PC-9 (cell line): ENCODE measurements at regions of chr1 and their contacts with region 1.

Region 1: GRCh38 chr1:94115900-94116436 is 5.0 kb downstream of the ABCA4 start:
- DNase-seq: no peak
- H3K4me3 ChIP-seq: no peak overlapping the region
- H3K27ac ChIP-seq: peak overlapping the region; percentile 39
- H3K4me1 ChIP-seq: peaks cover 49% of the 10 kb centered on the region
- H3K27me3 ChIP-seq: no peaks in the 10 kb centered on the region
- CTCF ChIP-seq: no peak

Region 2: DNA sequence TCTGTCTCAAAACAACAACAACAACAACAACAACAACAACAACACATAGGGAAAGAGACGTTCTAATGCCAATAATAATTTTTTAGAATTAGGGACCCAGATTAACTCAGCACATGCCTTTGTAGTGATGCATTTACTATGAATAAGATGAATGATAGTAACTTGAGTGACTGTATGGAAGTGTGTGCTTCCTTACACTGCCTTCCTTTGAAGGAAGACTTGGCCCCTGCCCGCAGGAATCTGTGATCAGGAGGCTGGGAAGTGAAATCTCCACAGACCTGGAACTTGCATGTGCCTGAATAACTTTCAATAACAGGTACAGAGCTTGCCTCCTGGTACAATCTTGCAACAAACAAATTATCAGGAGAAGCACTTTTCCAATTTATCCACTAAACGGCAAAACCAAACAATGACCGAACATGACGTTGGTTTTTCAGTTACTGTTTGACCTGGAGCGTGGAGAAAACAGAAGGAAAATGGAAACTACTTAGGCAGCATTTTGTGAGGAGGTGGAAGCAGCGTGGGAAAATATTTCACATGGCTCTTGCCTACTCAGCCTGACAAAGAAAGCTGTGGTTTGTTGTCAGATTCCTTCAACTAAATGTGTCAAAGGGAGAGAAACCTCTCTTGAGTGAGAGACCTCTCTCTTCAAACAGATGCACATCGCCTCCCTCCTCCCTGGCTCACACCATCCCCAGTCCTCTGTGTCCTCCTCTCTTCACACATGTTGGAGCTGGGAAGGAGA is 15.1 kb after region 1 on chr1:
- CTCF ChIA-PET with region 1: no interaction called
- POLR2A ChIA-PET with region 1: no interaction called
- intact Hi-C with region 1: loop called (anchors 1 kb)
- DNase-seq: peak; percentile 43 to 61
- H3K4me3 ChIP-seq: no peak overlapping the region
- H3K27ac ChIP-seq: peak overlapping the region; percentile 29; the same call in 1 of the 2 replicates
- H3K4me1 ChIP-seq: peaks cover 9% of the 10 kb centered on the region
- H3K27me3 ChIP-seq: no peaks in the 10 kb centered on the region
- CTCF ChIP-seq: no peak